Adrenal gland (tissue), 19 donors: ENCODE measurements at regions of chr17 and their contacts with region 1.

Region 1: GRCh38 chr17:51537996-51538550 is 277.7 kb downstream of the UTP18 start:
- DNase-seq: no peak
- H3K4me3 ChIP-seq: no peak overlapping the region
- H3K27ac ChIP-seq: no peak overlapping the region
- H3K4me1 ChIP-seq: no peaks in the 10 kb centered on the region
- H3K27me3 ChIP-seq: no peaks in the 10 kb centered on the region
- CTCF ChIP-seq: no peak
- POLR2A ChIP-seq: no peak

Region 2: GRCh38 chr17:51319186-51319585 is 218.9 kb before region 1 on chr17:
- intact Hi-C with region 1: loop called in 1 of 2 experiments (anchors 10 kb)
- DNase-seq: no peak
- H3K4me3 ChIP-seq: no peak overlapping the region
- H3K27ac ChIP-seq: no peak overlapping the region
- H3K4me1 ChIP-seq: no peaks in the 10 kb centered on the region
- H3K27me3 ChIP-seq: no peaks in the 10 kb centered on the region
- CTCF ChIP-seq: no peak
- POLR2A ChIP-seq: no peak